ENCODE measurements at regions of chr6 and their contacts with region 1.

Region 1: DNA sequence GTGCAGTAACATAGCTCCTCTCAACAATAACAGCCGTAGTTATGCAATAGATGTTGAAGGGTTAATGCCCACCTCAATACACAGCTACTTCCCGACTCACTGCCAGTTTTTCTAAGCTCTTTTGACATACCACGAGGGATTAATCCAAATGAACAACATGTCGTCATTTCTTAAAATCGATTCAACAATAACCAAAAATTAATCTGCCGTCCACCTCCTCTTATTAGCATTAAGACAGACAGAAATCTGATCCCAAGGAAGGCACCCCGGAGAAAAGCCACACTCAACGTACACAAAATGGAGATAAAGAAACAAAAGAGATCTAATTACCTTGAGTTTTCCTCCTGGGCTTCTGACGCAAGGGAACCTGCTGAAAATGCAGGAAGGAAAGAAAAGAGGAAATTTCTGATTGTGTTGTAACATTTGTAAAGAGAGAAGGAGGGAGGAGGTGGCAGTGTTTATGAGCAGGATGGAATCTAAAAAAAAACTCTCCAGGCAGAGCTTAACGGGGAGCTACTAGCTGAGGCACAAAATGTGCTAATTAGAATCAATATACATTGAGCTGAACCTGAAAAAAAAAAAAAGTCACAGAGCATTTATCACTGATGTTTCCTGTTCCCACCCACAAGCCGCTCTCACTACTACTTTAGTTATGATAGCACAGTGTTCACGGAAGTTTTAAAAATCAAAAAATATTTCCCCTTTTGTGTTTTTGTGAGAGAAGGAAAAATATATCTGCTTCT is 109.3 kb downstream of the IPCEF1 start:
- DNase-seq: no peak
- H3K4me3 Mint-ChIP-seq: peak overlapping the region; percentile 85
- H3K27ac Mint-ChIP-seq: peak overlapping the region; percentile 76
- H3K4me1 Mint-ChIP-seq: peaks cover 87% of the 10 kb centered on the region
- H3K27me3 Mint-ChIP-seq: no peaks in the 10 kb centered on the region

Region 2: DNA sequence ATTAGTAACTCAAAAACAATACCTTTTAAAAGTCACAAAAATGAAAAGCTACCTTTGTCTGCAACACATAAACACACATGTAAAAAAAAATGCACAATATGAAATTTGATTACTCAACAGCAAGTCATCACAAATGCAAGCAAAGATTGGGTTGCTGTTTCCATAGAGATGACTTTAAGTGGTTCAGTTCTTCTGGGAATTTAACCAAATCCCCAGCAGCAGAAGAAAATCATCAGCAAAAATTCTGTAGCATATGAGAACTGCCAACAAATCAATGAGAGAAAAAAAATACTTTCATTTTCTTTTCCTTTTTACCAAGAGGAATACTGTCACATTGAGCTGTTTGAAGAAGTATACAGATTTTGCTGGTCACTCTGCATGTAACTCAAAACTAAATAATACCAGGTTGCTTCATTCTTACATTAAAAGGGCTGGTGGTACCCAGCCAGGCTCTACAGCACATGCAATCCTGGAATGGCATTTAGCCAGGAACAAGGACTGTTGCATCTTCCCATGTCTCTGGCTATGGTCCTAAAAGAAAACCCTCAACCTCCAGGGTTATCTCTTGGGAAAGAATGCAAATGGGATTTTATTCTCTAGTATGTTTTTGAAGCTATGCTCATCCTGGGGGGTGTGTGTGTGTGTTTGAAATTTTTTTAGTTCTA is 50.0 kb before region 1 on chr6:
- intact Hi-C with region 1: loop called (anchors 2 kb)
- DNase-seq: no peak
- H3K4me3 Mint-ChIP-seq: no peak overlapping the region
- H3K27ac Mint-ChIP-seq: no peak overlapping the region
- H3K4me1 Mint-ChIP-seq: peaks cover 16% of the 10 kb centered on the region
- H3K27me3 Mint-ChIP-seq: no peaks in the 10 kb centered on the region

Region 3: GRCh38 chr6:154229786-154230185 is 17.5 kb before region 1 on chr6:
- intact Hi-C with region 1: loop called (anchors 1 kb)
- DNase-seq: peak; percentile 49
- H3K4me3 Mint-ChIP-seq: peak overlapping the region; percentile 46
- H3K27ac Mint-ChIP-seq: peak overlapping the region; percentile 47
- H3K4me1 Mint-ChIP-seq: peaks cover 57% of the 10 kb centered on the region
- H3K27me3 Mint-ChIP-seq: no peaks in the 10 kb centered on the region

Region 4: DNA sequence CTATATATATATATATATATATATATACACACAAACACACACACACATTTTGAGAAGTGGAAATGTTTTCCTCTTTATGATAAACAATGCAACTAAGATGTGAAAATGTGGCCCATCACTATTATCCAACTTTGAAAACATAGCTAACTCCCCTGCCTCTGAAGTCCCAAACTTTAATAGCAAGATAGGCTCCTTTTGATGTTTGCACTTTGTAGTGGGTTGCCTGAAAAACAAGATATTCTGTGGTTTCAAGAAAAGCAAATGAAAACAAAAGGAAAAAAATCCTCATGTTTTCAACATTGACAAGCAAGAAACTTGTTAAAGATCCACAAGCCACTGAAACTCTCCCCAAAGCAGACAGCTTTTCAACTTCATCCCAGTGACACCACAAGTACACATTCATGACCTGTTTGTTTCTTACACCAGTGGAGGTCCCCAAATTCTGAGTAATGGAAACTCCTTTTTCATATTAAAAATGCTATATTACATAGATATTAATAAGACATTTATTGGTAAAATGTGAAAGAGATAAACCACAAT is 19.3 kb after region 1 on chr6:
- intact Hi-C with region 1: loop called (anchors 1 kb)
- DNase-seq: no peak
- H3K4me3 Mint-ChIP-seq: no peak overlapping the region
- H3K27ac Mint-ChIP-seq: peak overlapping the region; percentile 79
- H3K4me1 Mint-ChIP-seq: peaks cover 22% of the 10 kb centered on the region
- H3K27me3 Mint-ChIP-seq: peaks cover 5% of the 10 kb centered on the region

Region 5: GRCh38 chr6:154276810-154277628 is 29.7 kb after region 1 on chr6:
- intact Hi-C with region 1: loop called (anchors 1 kb)
- DNase-seq: no peak
- H3K4me3 Mint-ChIP-seq: peak overlapping the region; percentile 65
- H3K27ac Mint-ChIP-seq: peak overlapping the region; percentile 74
- H3K4me1 Mint-ChIP-seq: peaks cover 23% of the 10 kb centered on the region
- H3K27me3 Mint-ChIP-seq: peaks cover 18% of the 10 kb centered on the region

Region 6: GRCh38 chr6:154606457-154606856 is 359.2 kb after region 1 on chr6:
- intact Hi-C with region 1: loop called (anchors 5 kb)
- DNase-seq: peak; percentile 66
- H3K4me3 Mint-ChIP-seq: peak overlapping the region; percentile 65
- H3K27ac Mint-ChIP-seq: peak overlapping the region; percentile 86
- H3K4me1 Mint-ChIP-seq: peaks cover 24% of the 10 kb centered on the region
- H3K27me3 Mint-ChIP-seq: peaks cover 3% of the 10 kb centered on the region